Cardiac septum (tissue), 1 donor: ENCODE measurements at regions of chr22 and their contacts with region 1.

Region 1: DNA sequence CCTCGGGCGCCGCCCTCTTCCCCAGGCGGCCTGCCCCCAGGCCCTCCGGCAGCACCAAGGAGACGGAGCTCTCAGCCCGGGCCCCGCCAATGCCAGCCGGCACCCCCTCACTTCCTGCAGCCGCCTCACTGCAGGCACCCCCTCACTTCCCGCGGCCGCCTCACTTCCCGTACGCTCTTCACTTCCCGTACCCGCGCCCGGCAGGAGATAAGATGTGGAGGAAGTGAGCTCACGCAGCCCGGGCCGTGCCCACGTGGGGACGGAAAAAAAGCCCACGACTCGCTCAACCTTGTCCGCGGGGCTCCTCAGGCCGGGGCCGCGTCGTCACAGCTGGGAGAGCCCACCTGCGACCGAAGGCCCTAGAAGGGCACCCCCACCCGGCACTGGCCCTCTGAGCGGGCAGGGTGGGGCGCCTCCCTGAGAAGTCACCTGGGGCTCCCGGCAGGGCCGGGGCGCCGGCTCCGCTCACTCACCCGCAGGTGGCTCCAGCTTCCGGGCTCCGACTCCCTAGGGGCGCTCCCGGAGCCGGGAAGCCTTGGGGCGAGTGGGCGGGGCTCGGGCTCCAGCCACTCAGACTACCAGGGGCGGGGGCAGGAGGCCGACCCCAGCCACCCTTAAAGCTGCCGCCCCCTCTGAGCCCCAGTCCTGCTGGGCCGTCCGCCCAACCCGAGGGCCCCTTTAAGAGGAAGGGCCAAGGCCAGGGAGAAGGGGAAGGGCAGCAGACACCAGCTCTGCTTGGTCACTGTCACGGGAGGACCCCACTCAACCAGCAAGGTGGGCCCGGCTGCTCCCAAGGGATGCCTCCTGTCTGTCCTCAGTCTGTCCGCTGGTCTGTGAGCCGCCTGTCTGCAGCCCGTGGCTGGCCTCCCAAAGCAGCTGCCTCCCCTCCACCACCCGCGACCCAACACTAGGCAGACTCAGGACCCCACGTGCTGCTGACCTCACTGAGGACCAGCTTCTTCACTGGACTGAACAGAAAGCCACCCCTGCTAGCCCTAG is 31.4 kb downstream of the PISD start:
- DNase-seq: peak; percentile 93

Region 2: DNA sequence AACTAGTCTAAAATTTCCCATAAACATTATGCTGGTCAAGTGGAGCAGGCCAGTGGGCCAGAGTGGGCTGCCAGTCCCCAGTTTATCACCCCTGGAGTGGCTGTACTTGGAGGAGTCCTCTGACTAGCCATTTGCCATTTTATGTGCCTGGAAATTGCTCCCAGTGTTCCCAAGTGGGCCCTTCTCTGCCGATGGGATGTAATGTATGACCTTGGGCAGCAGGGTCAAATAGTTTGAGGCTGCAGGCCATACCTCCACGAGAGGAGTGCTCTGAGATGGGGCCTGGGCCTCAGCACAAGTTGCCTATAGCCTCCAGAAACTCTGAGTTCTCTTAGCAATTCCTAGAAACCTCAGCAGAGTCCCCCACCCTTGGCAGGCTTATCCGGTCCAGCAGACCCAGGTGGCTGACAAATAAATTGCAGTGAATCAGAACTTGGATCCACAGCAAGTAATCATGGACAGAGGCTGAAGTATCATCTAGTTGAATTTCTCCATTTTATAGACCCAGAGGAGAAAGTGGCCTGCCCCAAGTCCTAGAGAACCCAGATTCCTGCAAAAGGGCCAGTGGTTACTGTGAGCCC is 266.7 kb before region 1 on chr22:
- intact Hi-C with region 1: no loop called
- DNase-seq: no peak

Region 3: GRCh38 chr22:31489604-31490495 is 140.8 kb before region 1 on chr22 and contains the start of gene EIF4ENIF1:
- intact Hi-C with region 1: loop called (anchors 5 kb)
- DNase-seq: peak; percentile 94
- total RNA-seq, gene EIF4ENIF1: 30.3 TPM

Region 4: GRCh38 chr22:31561238-31561887 is 69.3 kb before region 1 on chr22:
- intact Hi-C with region 1: loop called (anchors 2 kb)
- DNase-seq: peak; percentile 75

Region 5: DNA sequence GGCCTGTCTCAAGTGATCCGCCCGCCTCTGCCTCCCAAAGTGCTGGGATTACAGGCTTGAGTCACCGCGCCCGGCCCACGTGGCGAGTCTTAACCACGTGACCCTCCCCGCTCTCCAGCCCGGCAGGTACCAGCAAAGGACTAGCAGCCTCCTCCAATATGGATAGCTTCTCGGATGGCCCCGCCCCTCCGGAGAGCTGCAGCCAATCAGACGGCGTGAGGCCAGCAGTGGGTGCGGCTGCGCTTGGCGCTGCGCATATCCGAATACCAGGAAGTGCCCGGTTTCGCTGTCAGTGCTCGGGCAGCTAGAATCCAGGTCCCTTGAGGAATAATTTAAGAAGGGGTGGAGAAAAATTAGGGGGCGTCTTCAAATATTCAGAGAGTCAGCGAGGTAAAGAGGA is 46.1 kb after region 1 on chr22:
- intact Hi-C with region 1: no loop called
- DNase-seq: peak; percentile 97